Breast epithelium (tissue), 4 donors: ENCODE measurements at regions of chrX and their contacts with region 1.

Region 1: DNA sequence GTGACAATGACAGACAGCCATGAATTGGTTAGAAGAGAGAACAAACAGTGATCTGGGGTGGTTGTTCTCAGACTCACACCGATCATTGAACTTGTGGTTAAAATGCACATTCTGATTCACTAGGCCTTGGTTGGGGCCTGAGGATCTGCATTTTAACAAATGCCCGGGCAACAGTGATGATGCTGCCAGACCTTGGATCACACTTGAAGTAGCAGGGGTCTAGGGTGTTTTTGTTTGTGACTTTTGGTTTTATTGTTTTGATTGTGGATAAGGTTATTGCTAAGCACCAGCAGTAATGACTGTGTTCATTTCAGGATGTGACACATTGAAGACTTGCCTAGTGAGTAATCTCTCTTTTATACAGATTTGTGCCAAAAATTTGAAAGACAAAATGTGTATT is 36.5 kb downstream of the TXLNG start:
- DNase-seq: no peak
- H3K4me3 ChIP-seq: no peak overlapping the region
- H3K27ac ChIP-seq: no peak overlapping the region
- H3K4me1 ChIP-seq: no peaks in the 10 kb centered on the region
- H3K27me3 ChIP-seq: no peaks in the 10 kb centered on the region
- CTCF ChIP-seq: no peak
- POLR2A ChIP-seq: no peak

Region 2: DNA sequence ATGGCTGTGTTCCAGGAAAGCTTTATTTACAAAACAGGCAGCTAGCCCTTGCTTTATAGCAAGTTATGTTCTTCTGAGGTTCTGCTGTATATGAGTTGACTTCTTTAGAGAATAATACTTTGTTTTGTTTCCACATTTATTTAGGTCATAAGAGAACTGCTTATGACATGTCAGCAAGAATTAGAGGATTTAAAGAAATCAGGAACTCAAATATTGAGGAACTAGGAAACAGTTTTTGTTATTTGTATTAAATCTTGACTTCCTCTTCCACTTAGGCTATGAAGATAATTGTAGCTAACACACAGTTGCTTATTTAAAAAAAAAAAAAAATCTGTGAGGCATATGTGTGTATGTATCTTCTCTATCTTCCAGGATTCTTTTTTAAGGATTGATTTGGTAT is 1018.2 kb before region 1 on chrX:
- intact Hi-C with region 1: no loop called
- DNase-seq: no peak
- H3K4me3 ChIP-seq: no peak overlapping the region
- H3K27ac ChIP-seq: no peak overlapping the region
- H3K4me1 ChIP-seq: no peaks in the 10 kb centered on the region
- H3K27me3 ChIP-seq: no peaks in the 10 kb centered on the region
- CTCF ChIP-seq: no peak
- POLR2A ChIP-seq: no peak

Region 3: GRCh38 chrX:16743604-16744325 is 79.0 kb before region 1 on chrX:
- intact Hi-C with region 1: loop called (anchors 2 kb)
- DNase-seq: no peak
- H3K4me3 ChIP-seq: no peak overlapping the region
- H3K27ac ChIP-seq: no peak overlapping the region
- H3K4me1 ChIP-seq: no peaks in the 10 kb centered on the region
- H3K27me3 ChIP-seq: no peaks in the 10 kb centered on the region
- CTCF ChIP-seq: no peak
- POLR2A ChIP-seq: no peak

Region 4: GRCh38 chrX:16774746-16775145 is 48.0 kb before region 1 on chrX:
- intact Hi-C with region 1: loop called (anchors 2 kb)
- DNase-seq: no peak
- H3K4me3 ChIP-seq: no peak overlapping the region
- H3K27ac ChIP-seq: no peak overlapping the region
- H3K4me1 ChIP-seq: no peaks in the 10 kb centered on the region
- H3K27me3 ChIP-seq: no peaks in the 10 kb centered on the region
- CTCF ChIP-seq: no peak
- POLR2A ChIP-seq: no peak

Region 5: GRCh38 chrX:16836371-16836770 is 13.6 kb after region 1 on chrX:
- intact Hi-C with region 1: no loop called
- DNase-seq: no peak
- H3K4me3 ChIP-seq: no peak overlapping the region
- H3K27ac ChIP-seq: no peak overlapping the region
- H3K4me1 ChIP-seq: no peaks in the 10 kb centered on the region
- H3K27me3 ChIP-seq: no peaks in the 10 kb centered on the region
- CTCF ChIP-seq: no peak
- POLR2A ChIP-seq: no peak

Region 6: GRCh38 chrX:16868920-16869319 is 46.2 kb after region 1 on chrX:
- intact Hi-C with region 1: no loop called
- DNase-seq: no peak
- H3K4me3 ChIP-seq: peak overlapping the region; percentile 60 to 78 (median 65)
- H3K27ac ChIP-seq: no peak overlapping the region
- H3K4me1 ChIP-seq: no peaks in the 10 kb centered on the region
- H3K27me3 ChIP-seq: peaks cover 0 to 21% of the 10 kb centered on the region in 2 donors
- CTCF ChIP-seq: no peak
- POLR2A ChIP-seq: no peak

Region 7: DNA sequence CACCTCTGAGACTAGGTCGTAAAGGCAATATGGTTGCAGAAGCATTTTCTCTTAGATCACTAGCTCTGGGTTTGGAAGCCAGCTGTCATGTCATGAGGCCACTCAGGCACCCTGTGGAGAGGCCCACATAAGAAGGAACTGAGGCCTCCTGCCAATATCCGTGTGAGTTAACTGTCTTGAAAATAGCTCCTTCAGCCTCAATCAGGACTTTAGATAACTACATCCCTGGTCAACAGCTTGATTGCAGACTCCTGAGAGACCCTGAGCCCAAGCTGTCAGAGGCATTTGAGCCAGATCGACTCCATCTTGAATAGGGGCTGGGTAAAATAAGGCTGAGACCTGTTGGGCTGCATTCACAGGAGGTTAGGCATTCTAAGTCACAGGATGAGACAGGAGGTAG is 108.6 kb after region 1 on chrX:
- intact Hi-C with region 1: no loop called
- DNase-seq: no peak
- H3K4me3 ChIP-seq: no peak overlapping the region
- H3K27ac ChIP-seq: no peak overlapping the region
- H3K4me1 ChIP-seq: no peaks in the 10 kb centered on the region
- H3K27me3 ChIP-seq: peaks cover 0 to 42% of the 10 kb centered on the region in 2 donors
- CTCF ChIP-seq: no peak
- POLR2A ChIP-seq: no peak

Region 8: DNA sequence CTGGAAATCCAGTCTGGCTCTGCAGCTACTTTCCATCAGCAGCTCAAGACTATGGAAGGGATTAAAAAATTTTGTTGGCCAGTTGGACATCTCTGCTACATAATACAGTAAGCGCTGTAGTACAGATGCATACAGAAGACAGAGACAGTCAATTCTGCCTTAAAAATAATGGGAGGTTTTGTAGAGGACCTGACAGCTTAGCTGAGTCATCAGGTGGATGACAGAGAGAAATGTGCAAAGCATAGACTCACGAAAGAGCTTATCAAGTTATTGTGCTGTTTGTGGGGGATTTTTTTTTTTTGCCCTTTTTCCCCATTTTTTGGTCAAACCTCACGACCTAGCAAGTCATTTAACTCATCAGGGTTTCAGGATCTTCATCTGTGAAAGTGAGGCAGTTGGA is 765.6 kb after region 1 on chrX:
- intact Hi-C with region 1: loop called (anchors 5 kb)
- DNase-seq: no peak
- H3K4me3 ChIP-seq: no peak overlapping the region
- H3K27ac ChIP-seq: no peak overlapping the region
- H3K4me1 ChIP-seq: no peaks in the 10 kb centered on the region
- H3K27me3 ChIP-seq: peaks cover 0 to 19% of the 10 kb centered on the region in 2 donors
- CTCF ChIP-seq: no peak
- POLR2A ChIP-seq: no peak